Right ventricle myocardium superior (tissue), 1 donor: ENCODE measurements at regions of chr2 and their contacts with region 1.

Region 1: GRCh38 chr2:85288244-85288725 is 39.5 kb downstream of the TGOLN2 start:
- DNase-seq: no peak
- ATAC-seq: no peak

Region 2: GRCh38 chr2:85132834-85133637 is 155.2 kb before region 1 on chr2 and contains the start of gene TCF7L1:
- intact Hi-C with region 1: loop called (anchors 2 kb)
- DNase-seq: peak; percentile 90
- ATAC-seq: peak; percentile 96
- total RNA-seq, gene TCF7L1: 9.3 TPM